Gastrocnemius medialis (tissue), 4 donors: ENCODE measurements at regions of chr3 and their contacts with region 1.

Region 1: GRCh38 chr3:52446631-52447511 is 2.0 kb upstream of the SEMA3G start:
- DNase-seq: peak in 1 of 2 donors; percentile 70
- ATAC-seq: peak; percentile 20 to 40
- H3K4me3 ChIP-seq: no peak overlapping the region
- H3K27ac ChIP-seq: peak overlapping the region; percentile 94 to 99 (median 97)
- H3K4me1 ChIP-seq: peaks cover 15 to 45% of the 10 kb centered on the region in 2 donors
- H3K27me3 ChIP-seq: no peaks in the 10 kb centered on the region
- CTCF ChIP-seq: peak; percentile 99 to 100 (median 100)
- POLR2A ChIP-seq: no peak

Region 2: DNA sequence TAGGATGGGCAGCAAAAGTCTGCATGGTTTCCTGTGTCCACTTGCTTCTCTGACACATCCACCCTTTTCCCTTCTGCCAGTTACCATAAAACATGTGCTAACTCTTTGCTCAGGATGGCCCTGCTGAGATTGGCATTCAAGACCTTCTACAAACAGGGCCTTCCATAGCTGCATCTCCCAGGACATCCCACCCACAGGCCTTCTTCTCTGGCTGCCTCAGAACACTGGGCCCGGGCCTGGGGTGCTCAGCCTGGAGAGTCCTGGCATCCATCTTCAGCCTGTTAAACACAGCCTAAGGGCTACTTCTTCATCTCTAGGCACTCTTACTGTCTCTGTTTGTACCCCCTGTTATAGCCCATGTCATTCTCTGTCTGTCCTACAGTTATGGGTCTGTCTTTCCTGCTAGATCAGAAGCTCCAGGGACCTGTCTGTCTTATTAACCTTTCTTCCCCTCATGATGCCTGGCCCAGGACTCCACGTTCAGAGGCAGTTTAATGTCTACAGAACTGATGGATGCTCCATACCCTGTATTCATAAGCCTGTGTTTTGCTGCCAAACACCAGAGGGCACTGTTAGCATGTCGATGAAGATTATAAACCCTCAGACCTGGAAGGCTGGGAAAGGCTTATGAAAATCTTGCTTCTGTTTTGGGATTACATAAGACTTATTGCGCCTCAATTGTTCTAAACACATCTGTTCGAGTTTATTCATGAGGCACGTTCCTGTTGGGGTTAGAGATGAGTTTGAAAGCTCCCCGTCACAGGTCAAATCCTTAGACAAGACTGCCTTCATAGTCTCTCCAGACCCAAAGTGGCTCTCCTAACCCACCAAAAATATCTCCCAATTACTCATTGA is 18.5 kb before region 1 on chr3:
- in situ Hi-C with region 1: no loop called
- intact Hi-C with region 1: loop called (anchors 1 kb)
- DNase-seq: peak; percentile 58 to 63
- ATAC-seq: peak; percentile 81 to 90
- H3K4me3 ChIP-seq: no peak overlapping the region
- H3K27ac ChIP-seq: peak overlapping the region in 3 of 4 donors; percentile 45 to 66 (median 58)
- H3K4me1 ChIP-seq: peaks cover 9 to 11% of the 10 kb centered on the region in 2 donors
- H3K27me3 ChIP-seq: no peaks in the 10 kb centered on the region
- CTCF ChIP-seq: peak; percentile 53 to 76 (median 74)
- POLR2A ChIP-seq: no peak

Region 3: GRCh38 chr3:53495520-53496391 is 1048.9 kb after region 1 on chr3:
- in situ Hi-C with region 1: no loop called
- intact Hi-C with region 1: no loop called
- DNase-seq: no peak
- ATAC-seq: no peak
- H3K4me3 ChIP-seq: peak overlapping the region; percentile 35 to 43 (median 40)
- H3K27ac ChIP-seq: no peak overlapping the region
- H3K4me1 ChIP-seq: peaks cover 7 to 16% of the 10 kb centered on the region in 2 donors
- H3K27me3 ChIP-seq: peaks cover 23 to 38% (median 36%) of the 10 kb centered on the region in 3 donors
- CTCF ChIP-seq: no peak
- POLR2A ChIP-seq: no peak